Natural killer cell (primary cell): ENCODE measurements at regions of chr19 and their contacts with region 1.

Region 1: DNA sequence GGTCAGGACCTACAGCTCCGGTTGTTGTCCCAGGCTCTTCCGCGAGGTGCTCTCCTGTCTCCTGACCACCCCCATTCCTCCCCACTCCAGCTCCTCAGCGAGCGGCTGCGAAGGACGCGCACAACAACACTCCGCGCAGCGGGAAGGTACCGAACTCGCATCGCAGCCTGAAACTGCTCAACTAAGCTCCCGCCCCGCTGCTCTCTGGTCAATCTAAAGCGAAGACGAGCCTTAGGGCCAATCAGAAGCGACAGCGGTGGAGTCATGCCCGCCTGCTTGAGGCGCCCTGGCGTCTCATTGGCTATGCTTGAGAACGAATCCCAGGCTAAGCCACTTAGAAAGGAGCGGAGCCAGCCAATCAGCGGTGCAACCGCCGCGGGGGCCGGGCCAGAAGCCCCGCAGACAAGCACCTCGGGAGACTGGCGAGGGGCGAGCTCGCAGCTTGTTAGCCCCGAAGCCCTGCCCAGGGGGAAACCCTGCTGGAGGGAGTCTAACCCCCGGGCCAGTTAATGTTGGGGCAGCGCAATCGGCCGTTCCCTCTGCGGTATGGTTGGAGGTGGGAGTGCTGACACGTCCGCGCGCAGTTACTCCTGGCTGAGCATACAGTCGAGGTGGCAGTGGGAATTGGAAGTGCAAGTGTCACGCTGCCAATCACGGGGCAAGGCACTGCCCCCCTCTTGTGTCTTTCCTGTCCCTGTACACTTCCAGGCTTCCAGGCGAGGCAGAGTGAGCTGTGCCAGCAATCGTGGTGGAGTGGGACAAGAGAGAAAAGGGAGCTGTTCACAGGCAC is 1.9 kb upstream of the ZBTB32 start:
- DNase-seq: peak; percentile 85 to 97
- ATAC-seq: peak; percentile 99
- H3K4me3 ChIP-seq: peak overlapping the region; percentile 46
- H3K4me3 Mint-ChIP-seq: peak overlapping the region; percentile 97
- H3K27ac ChIP-seq: peak overlapping the region; percentile 41
- H3K27ac Mint-ChIP-seq: peak overlapping the region; percentile 82 to 87
- H3K4me1 ChIP-seq: peaks cover 14% of the 10 kb centered on the region
- H3K4me1 Mint-ChIP-seq: peaks cover 8 to 10% of the 10 kb centered on the region in 2 donors
- H3K27me3 ChIP-seq: no peaks in the 10 kb centered on the region
- H3K27me3 Mint-ChIP-seq: peaks cover 4 to 7% of the 10 kb centered on the region in 2 donors
- CTCF ChIP-seq: no peak

Region 2: GRCh38 chr19:35748106-35749020 is 45.9 kb after region 1 on chr19 and contains the start of gene LIN37:
- intact Hi-C with region 1: loop called (anchors 5 kb)
- DNase-seq: peak; percentile 97 to 99
- ATAC-seq: peak; percentile 73 to 90 (median 77)
- H3K4me3 ChIP-seq: peak within 1 kb of the TSS; percentile 91
- H3K4me3 Mint-ChIP-seq: peak within 1 kb of the TSS; percentile 97
- H3K27ac ChIP-seq: peak within 1 kb of the TSS; percentile 84
- H3K27ac Mint-ChIP-seq: peak within 1 kb of the TSS; percentile 92
- H3K4me1 ChIP-seq: peaks cover 46% of the 10 kb centered on the region
- H3K4me1 Mint-ChIP-seq: peaks cover 33 to 47% of the 10 kb centered on the region in 2 donors
- H3K27me3 ChIP-seq: no peaks in the 10 kb centered on the region
- H3K27me3 Mint-ChIP-seq: no peaks in the 10 kb centered on the region
- CTCF ChIP-seq: no peak
- total RNA-seq, gene LIN37: 16.7 to 22.1 (median 18.2) TPM

Region 3: GRCh38 chr19:36236304-36236945 is 534.0 kb after region 1 on chr19:
- intact Hi-C with region 1: no loop called
- DNase-seq: no peak
- ATAC-seq: no peak
- H3K4me3 ChIP-seq: no peak overlapping the region
- H3K4me3 Mint-ChIP-seq: no peak overlapping the region
- H3K27ac ChIP-seq: no peak overlapping the region
- H3K27ac Mint-ChIP-seq: no peak overlapping the region
- H3K4me1 ChIP-seq: no peaks in the 10 kb centered on the region
- H3K4me1 Mint-ChIP-seq: no peaks in the 10 kb centered on the region
- H3K27me3 ChIP-seq: no peaks in the 10 kb centered on the region
- H3K27me3 Mint-ChIP-seq: no peaks in the 10 kb centered on the region
- CTCF ChIP-seq: no peak